Colonic mucosa (tissue), 4 donors: ENCODE measurements at regions of chr6 and their contacts with region 1.

Region 1: DNA sequence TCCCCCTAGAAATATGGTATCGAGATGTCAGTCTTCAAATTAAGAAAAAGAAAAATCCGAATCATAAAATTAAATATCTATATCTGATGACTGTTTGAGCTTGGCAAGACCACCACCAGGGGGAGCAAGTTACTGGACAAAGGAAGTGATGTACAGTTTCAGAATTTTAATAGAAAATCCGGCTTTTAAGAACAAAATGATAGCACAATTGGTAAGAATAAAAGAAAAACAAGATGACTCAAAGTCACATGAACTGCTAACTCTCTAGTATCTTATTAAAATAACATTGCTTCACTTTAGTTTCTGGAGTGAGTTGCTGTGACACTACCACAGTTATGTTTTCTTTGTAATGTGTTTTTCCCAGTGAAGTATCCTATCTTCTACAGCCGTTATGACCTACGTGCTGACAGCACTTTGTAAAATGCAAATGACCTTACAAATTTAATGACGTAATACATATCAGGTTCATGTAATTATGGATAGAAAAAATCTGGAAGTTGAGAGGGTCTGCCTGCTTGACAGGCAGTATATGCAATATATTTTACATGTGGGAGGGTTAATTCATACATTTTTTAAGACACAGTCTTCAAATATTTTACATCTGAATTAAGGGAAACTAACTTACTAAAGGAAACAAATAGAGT is 405.3 kb upstream of the HS3ST5 start:
- DNase-seq: peak; percentile 30
- H3K4me3 ChIP-seq: no peak overlapping the region
- H3K27ac ChIP-seq: no peak overlapping the region
- H3K4me1 ChIP-seq: no peaks in the 10 kb centered on the region
- H3K27me3 ChIP-seq: no peaks in the 10 kb centered on the region
- CTCF ChIP-seq: peak; percentile 53

Region 2: DNA sequence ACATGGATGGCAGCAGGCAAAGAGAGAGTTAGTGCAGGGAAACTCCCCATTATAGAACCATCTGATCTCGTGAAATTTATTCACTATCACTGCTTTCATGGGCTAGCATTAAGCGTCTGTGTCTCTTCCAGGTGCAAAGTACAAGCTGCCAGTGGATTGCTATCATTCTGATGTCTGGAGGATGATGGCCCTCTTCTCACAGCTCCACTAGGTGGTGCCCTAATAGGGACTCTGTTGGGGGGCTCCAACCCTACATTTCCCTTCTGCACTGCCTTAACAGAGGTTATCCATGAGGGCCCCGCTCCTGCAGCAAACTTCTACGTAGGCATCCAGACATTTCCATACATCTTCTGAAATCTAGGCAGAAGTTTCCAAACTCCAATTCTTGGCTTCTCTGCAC is 57.5 kb before region 1 on chr6:
- intact Hi-C with region 1: no loop called
- DNase-seq: no peak
- H3K4me3 ChIP-seq: no peak overlapping the region
- H3K27ac ChIP-seq: no peak overlapping the region
- H3K4me1 ChIP-seq: no peaks in the 10 kb centered on the region
- H3K27me3 ChIP-seq: no peaks in the 10 kb centered on the region
- CTCF ChIP-seq: no peak

Region 3: GRCh38 chr6:114952229-114952628 is 204.1 kb after region 1 on chr6:
- intact Hi-C with region 1: no loop called
- DNase-seq: no peak
- H3K4me3 ChIP-seq: no peak overlapping the region
- H3K27ac ChIP-seq: no peak overlapping the region
- H3K4me1 ChIP-seq: no peaks in the 10 kb centered on the region
- H3K27me3 ChIP-seq: no peaks in the 10 kb centered on the region
- CTCF ChIP-seq: no peak

Region 4: DNA sequence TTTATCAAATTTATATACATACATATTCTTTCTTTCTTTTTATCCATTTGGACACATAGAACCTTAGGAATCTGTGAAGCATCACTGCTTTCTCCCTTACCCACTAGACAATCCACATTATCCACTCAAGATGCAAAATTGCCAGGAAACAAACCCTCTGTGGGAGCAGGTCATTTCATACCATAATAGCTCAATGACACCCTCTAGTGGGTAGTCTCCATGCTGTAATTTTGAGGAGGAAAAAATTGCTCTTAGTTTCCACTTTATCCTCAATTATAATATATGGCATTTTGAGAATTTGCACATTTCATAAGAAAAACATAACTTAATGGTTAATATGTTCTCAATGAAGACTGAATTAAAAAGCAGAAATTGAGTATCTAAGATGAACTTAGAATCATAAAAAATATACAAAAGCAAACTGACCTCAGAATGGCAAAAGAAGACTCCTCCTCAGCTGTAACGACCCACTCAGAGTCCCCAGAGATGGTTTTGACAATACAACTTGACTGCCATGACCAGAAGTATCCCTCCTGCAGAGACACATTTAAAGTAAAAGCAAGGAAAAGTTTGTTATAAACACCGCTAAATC is 1148.5 kb after region 1 on chr6:
- intact Hi-C with region 1: loop called (anchors 5 kb)
- DNase-seq: no peak
- H3K4me3 ChIP-seq: no peak overlapping the region
- H3K27ac ChIP-seq: no peak overlapping the region
- H3K4me1 ChIP-seq: no peaks in the 10 kb centered on the region
- H3K27me3 ChIP-seq: no peaks in the 10 kb centered on the region
- CTCF ChIP-seq: peak; percentile 52